ENCODE measurements at regions of chr10 and their contacts with region 1.

Region 1: DNA sequence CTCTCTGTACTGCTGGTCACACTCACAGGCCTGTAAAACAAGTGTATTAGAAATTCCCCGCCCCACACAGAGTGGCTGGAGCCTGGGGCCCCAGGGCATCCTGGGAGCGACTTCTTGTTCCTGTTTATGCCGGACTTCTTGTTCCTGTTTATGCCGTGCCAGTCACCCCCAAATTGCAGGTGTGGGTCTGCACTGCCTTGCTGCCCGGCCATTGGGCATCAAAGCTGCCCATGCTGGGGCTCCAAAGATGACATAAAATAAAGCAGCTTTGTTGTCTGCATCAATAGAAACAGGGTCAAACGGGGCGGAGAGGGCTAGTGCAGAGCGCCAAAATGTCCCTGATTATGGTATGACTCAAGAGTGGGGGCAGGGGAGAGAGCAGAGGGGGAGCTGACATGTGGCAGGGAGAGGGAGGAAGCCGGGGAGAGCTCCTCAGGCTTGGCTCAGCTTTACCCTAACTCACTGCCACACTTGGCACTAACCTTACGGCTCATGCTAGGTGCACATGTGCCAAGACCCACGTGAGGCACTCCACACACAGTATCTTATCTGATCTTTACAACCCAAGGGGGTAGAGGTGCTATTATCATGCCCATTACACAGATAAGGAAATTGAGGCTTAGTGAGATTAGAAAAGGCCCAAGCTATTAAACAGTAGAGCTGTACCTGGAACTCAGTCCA is 98.4 kb downstream of the PIP4K2A start:
- DNase-seq: no peak
- ATAC-seq: no peak
- H3K4me3 Mint-ChIP-seq: peak overlapping the region; percentile 16 to 73 (median 62)
- H3K27ac Mint-ChIP-seq: peak overlapping the region; percentile 73 to 97 (median 83)
- H3K4me1 Mint-ChIP-seq: peaks cover 56 to 98% (median 94%) of the 10 kb centered on the region in 4 donors
- H3K27me3 Mint-ChIP-seq: no peaks in the 10 kb centered on the region

Region 2: DNA sequence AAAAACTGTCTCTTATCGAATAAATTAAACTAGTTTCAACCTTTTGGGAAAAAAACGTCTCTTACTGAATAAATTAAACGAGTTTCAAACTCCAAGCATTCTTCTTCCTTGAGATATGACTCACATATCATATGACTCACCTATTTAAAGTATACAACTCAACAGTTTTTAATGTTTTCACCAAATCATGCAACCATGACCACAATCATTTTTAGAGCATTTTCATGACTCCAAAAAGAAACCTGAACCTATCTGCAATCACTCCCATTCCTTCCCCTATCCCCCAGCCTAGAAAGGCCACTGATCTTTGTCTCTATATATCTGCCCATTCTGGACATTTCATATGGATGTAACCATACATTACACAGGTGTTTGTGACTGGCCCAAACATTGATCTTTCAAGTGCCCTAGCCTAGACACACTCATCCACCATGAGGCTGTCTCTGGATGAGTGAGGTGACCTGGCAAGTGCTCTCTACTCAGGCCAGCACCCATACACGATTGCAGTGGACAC is 16.9 kb before region 1 on chr10:
- POLR2A ChIA-PET with region 1: interaction called, 30 read pairs
- DNase-seq: no peak
- ATAC-seq: peak in 1 of 2 donors; percentile 8
- H3K4me3 Mint-ChIP-seq: peak overlapping the region in 9 of 10 donors; percentile 8 to 66 (median 25)
- H3K27ac Mint-ChIP-seq: peak overlapping the region; percentile 84 to 96 (median 91)
- H3K4me1 Mint-ChIP-seq: peaks cover 43 to 94% (median 89%) of the 10 kb centered on the region in 4 donors
- H3K27me3 Mint-ChIP-seq: no peaks in the 10 kb centered on the region

Measured in naive thymus-derived CD8-positive, alpha-beta T cell (primary cell).